Ovary (tissue), 10 donors: ENCODE measurements at regions of chr22 and their contacts with region 1.

Region 1: GRCh38 chr22:50148991-50149721 is 21.4 kb upstream of the PANX2 start:
- DNase-seq: no peak
- H3K4me3 ChIP-seq: no peak overlapping the region
- H3K27ac ChIP-seq: no peak overlapping the region
- H3K4me1 ChIP-seq: no peaks in the 10 kb centered on the region
- H3K27me3 ChIP-seq: no peaks in the 10 kb centered on the region
- CTCF ChIP-seq: no peak
- EP300 ChIP-seq: no peak
- POLR2A ChIP-seq: no peak

Region 2: DNA sequence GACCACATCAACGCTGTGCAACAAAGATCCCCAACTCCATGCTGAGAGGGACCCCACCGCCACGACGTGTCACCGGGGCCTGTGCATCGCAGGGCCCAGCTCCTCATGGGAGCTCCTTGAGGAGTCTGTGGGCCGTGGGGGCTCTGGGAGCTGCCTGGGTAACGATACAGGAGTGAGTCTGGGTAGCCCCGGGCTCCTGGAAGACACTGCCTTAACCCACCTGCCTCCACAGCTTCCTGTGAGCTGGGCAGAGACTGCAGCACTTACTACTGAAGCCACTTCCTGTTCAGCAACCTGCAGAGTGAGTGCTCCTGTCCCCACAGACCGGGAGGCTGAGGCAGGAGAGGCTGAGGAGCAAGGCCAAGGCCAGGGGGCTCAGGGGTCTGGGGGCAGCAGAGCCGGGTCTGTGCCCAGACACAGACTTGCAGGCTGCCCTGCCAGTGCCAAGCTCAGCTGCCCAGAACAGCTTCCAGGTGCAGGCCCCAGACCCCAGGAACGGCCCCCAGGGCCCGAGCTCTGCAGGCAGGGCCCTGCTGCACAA is 548.2 kb before region 1 on chr22:
- intact Hi-C with region 1: no loop called
- DNase-seq: no peak
- H3K4me3 ChIP-seq: no peak overlapping the region
- H3K27ac ChIP-seq: no peak overlapping the region
- H3K4me1 ChIP-seq: no peaks in the 10 kb centered on the region
- H3K27me3 ChIP-seq: no peaks in the 10 kb centered on the region
- CTCF ChIP-seq: no peak
- EP300 ChIP-seq: no peak
- POLR2A ChIP-seq: no peak

Region 3: GRCh38 chr22:49779853-49780697 is 369.1 kb before region 1 on chr22:
- intact Hi-C with region 1: no loop called
- DNase-seq: peak in 1 of 5 donors; percentile 25
- H3K4me3 ChIP-seq: no peak overlapping the region
- H3K27ac ChIP-seq: no peak overlapping the region
- H3K4me1 ChIP-seq: peaks cover 20% of the 10 kb centered on the region
- H3K27me3 ChIP-seq: no peaks in the 10 kb centered on the region
- CTCF ChIP-seq: no peak
- EP300 ChIP-seq: no peak
- POLR2A ChIP-seq: no peak

Region 4: GRCh38 chr22:50200461-50201190 is 51.5 kb after region 1 on chr22 and contains the start of gene SELENOO:
- intact Hi-C with region 1: loop called in 2 of 4 experiments (anchors 5 to 10 kb)
- DNase-seq: peak; percentile 92 to 95 (median 93)
- H3K4me3 ChIP-seq: peak within 1 kb of the TSS; percentile 48
- H3K27ac ChIP-seq: peak within 1 kb of the TSS; percentile 16 to 81
- H3K4me1 ChIP-seq: peaks cover 5% of the 10 kb centered on the region
- H3K27me3 ChIP-seq: no peaks in the 10 kb centered on the region
- CTCF ChIP-seq: no peak
- EP300 ChIP-seq: no peak
- POLR2A ChIP-seq: peak; percentile 84
- total RNA-seq, gene SELENOO: 18.9 to 31.1 (median 23.0) TPM

Region 5: DNA sequence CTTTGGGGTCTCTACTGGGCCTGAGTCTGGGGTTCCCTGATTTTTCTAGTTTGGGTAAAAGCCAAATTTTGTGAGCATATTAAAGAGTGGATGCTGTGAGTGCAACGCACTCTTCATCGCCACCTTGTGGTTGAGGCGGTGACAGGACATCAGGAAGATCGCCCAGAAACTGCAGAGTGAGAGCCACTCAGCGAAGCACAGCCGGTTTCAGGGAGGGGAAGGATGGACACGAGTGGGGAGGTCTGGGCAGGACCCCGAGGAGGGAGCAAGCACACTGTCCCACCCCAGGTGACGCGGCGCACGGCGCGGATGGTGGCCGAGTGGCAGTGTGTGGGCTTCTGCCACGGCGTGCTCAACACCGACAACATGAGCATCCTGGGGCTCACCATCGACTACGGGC is 60.7 kb after region 1 on chr22:
- intact Hi-C with region 1: loop called (anchors 2 to 10 kb)
- DNase-seq: peak; percentile 64 to 83 (median 78)
- H3K4me3 ChIP-seq: no peak overlapping the region
- H3K27ac ChIP-seq: peak overlapping the region in 1 of 2 donors; percentile 4
- H3K4me1 ChIP-seq: peaks cover 4% of the 10 kb centered on the region
- H3K27me3 ChIP-seq: no peaks in the 10 kb centered on the region
- CTCF ChIP-seq: peak; percentile 70 to 86 (median 86)
- EP300 ChIP-seq: no peak
- POLR2A ChIP-seq: no peak

Region 6: DNA sequence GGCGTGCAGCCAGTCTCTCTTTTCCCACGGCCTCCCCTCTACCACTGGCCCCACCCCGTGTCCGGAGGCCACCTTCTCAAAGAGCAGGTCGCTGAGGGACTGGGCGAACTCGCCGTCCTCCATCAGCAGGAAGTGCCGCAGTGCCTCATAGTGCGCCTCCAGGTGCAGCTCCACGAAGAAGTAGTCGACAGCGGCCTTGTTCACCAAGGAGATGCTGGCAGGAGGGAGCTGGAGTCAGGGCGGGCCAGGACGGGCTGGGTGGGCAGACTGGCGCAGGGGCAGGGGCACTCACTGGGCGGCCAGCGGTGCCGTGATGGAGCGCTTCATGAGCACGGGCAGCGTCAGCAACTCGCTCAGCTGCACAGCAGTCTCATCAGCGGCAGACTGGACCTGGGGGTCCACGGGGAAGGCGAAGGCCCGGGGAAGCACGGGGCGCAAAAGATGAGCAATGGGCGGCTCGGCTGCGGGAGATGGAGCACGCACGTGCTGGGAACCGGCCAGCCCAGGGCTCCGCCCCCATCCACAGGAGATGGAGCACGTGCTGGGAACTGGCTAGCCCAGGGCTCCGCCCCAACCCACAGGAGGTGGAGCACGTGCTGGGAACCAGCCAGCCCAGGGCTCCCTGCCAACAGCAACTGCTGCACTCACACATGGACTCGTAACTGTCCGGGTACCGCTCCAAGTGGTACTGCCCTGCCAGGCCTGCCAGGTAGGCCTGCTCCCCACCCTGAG is 70.0 kb after region 1 on chr22:
- intact Hi-C with region 1: loop called in 1 of 4 experiments (anchors 5 kb)
- DNase-seq: peak; percentile 90 to 98 (median 95)
- H3K4me3 ChIP-seq: no peak overlapping the region
- H3K27ac ChIP-seq: no peak overlapping the region
- H3K4me1 ChIP-seq: peaks cover 4% of the 10 kb centered on the region
- H3K27me3 ChIP-seq: no peaks in the 10 kb centered on the region
- CTCF ChIP-seq: no peak
- EP300 ChIP-seq: no peak
- POLR2A ChIP-seq: no peak